Caco-2 (cell line): ENCODE measurements at regions of chr2 and their contacts with region 1.

Region 1: GRCh38 chr2:102262216-102263129 is 48.9 kb upstream of the IL1RL1 start:
- DNase-seq: no peak
- H3K4me3 ChIP-seq: no peak overlapping the region
- H3K4me3 Mint-ChIP-seq: no peak overlapping the region
- H3K27ac Mint-ChIP-seq: no peak overlapping the region
- H3K4me1 ChIP-seq: peaks cover 15% of the 10 kb centered on the region; the same call in 1 of the 2 replicates
- H3K4me1 Mint-ChIP-seq: no peaks in the 10 kb centered on the region
- H3K27me3 ChIP-seq: no peaks in the 10 kb centered on the region
- H3K27me3 Mint-ChIP-seq: no peaks in the 10 kb centered on the region
- CTCF ChIP-seq: no peak

Region 2: GRCh38 chr2:102304268-102304667 is 41.8 kb after region 1 on chr2:
- CTCF ChIA-PET with region 1: no interaction called
- POLR2A ChIA-PET with region 1: no interaction called
- intact Hi-C with region 1: loop called (anchors 2 kb)
- DNase-seq: no peak
- H3K4me3 ChIP-seq: no peak overlapping the region
- H3K4me3 Mint-ChIP-seq: no peak overlapping the region
- H3K27ac Mint-ChIP-seq: no peak overlapping the region
- H3K4me1 ChIP-seq: no peaks in the 10 kb centered on the region
- H3K4me1 Mint-ChIP-seq: no peaks in the 10 kb centered on the region
- H3K27me3 ChIP-seq: peaks cover 2% of the 10 kb centered on the region; the same call in 1 of the 2 replicates
- H3K27me3 Mint-ChIP-seq: peaks cover 26% of the 10 kb centered on the region
- CTCF ChIP-seq: no peak